ENCODE measurements at regions of chr12 and their contacts with region 1.

Region 1: DNA sequence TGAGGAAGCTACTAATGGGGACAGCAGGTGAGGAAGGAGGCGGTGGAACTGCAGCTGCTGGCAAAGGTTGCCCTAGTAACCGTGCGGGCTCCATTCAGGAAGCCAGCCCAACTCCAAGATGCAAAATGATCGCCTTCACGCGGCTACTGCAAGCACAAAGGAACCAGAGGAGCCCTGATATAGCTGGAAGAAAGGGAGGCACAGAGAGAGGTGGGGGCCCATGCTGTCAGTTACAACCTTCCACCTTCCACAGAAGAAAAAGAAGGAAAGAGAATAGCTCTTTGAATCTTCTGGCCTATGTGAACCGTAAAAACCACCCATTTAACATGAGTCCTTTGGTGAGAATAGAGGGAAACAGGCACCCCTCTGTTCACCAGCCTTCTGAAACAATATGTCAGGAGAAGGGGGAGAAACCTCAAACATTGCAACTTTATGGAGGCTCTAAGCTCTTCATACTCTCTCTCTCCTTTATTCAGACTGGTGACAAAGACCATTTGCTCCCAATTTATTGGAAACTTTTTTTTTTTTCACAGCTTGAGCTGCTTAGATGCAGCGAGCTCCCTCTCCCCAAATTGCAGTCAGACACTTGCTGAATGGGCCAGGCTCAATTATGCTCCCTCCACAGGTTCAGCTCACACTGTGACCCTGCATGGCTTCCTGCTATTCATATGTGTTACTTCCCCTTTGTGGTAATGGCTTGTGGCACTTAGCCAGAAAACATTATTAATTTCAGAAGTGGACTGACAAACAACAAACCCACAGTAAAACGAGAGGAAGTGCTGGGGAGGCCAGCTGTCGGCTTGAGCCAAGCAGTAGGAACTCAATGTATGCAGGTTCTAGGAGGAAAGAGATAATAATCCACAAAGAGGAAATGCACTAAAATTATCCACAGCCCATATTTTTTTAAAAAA is 6.2 kb downstream of the DUSP6 start:
- DNase-seq: peak; percentile 33 to 80
- ATAC-seq: peak; percentile 60 to 86 (median 80)
- H3K4me3 ChIP-seq: peak overlapping the region in 6 of 10 donors; percentile 66 to 94 (median 84)
- H3K27ac ChIP-seq: peak overlapping the region; percentile 36 to 100 (median 68)
- H3K4me1 ChIP-seq: peaks cover 15 to 68% (median 48%) of the 10 kb centered on the region in 9 donors
- H3K27me3 ChIP-seq: no peaks in the 10 kb centered on the region
- CTCF ChIP-seq: no peak

Region 2: DNA sequence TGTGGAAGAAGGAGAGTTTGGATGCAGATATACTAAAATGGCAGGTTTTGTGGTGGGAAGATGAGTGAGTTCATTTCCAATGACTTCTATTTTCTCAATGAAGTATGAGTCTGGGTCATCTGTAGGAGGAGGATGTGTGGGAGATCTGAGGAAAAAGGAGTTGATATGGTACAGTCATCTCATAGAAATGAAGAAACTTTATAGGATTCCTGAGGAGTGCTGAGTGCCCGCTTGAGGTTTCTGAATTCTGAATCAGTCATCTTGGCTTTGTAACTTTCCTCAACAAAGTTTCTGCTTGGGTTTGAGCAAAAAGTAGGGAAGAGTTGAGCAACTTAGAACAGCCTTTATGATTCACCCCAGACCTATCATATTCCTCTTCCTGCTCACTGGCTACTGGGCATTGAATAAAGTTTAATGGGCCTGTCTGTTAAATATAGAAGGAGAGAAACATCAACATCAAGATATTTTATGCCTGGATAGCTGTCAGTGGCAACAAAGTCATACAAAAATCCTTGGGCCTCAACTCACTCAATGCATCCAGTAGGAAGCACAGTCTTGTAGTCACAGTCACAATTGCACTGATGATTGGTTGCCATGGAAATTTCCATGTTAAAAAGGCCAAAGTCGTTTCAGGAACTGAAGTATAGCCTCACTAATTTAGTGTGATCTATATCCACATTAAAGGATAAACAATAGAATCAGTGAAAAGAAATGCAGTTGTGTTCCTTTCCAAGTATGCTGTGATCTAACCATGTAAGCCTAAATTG is 278.5 kb before region 1 on chr12:
- intact Hi-C with region 1: loop called in 1 of 10 experiments (anchors 10 kb)
- DNase-seq: no peak
- ATAC-seq: no peak
- H3K4me3 ChIP-seq: no peak overlapping the region
- H3K27ac ChIP-seq: no peak overlapping the region
- H3K4me1 ChIP-seq: peaks cover 0 to 3% (median 0%) of the 10 kb centered on the region in 9 donors
- H3K27me3 ChIP-seq: no peaks in the 10 kb centered on the region
- CTCF ChIP-seq: no peak

Region 3: GRCh38 chr12:89162704-89163261 is 183.3 kb before region 1 on chr12:
- intact Hi-C with region 1: loop called in 5 of 10 experiments (anchors 5 to 10 kb)
- DNase-seq: peak in 1 of 2 donors; percentile 65
- ATAC-seq: peak; percentile 77 to 91 (median 79)
- H3K4me3 ChIP-seq: no peak overlapping the region
- H3K27ac ChIP-seq: peak overlapping the region; percentile 31 to 93 (median 68)
- H3K4me1 ChIP-seq: peaks cover 0 to 88% (median 42%) of the 10 kb centered on the region in 9 donors
- H3K27me3 ChIP-seq: no peaks in the 10 kb centered on the region
- CTCF ChIP-seq: no peak

Region 4: GRCh38 chr12:89225808-89226411 is 120.2 kb before region 1 on chr12:
- intact Hi-C with region 1: loop called in 3 of 10 experiments (anchors 5 to 10 kb)
- DNase-seq: no peak
- ATAC-seq: peak in 7 of 8 donors; percentile 51 to 98 (median 83)
- H3K4me3 ChIP-seq: no peak overlapping the region
- H3K27ac ChIP-seq: peak overlapping the region in 4 of 10 donors; percentile 2 to 78 (median 53)
- H3K4me1 ChIP-seq: peaks cover 0 to 25% (median 10%) of the 10 kb centered on the region in 9 donors
- H3K27me3 ChIP-seq: no peaks in the 10 kb centered on the region
- CTCF ChIP-seq: no peak

Region 5: GRCh38 chr12:89244536-89244935 is 101.5 kb before region 1 on chr12:
- intact Hi-C with region 1: loop called in 6 of 10 experiments (anchors 5 to 10 kb)
- DNase-seq: no peak
- ATAC-seq: peak in 4 of 8 donors; percentile 42 to 69 (median 56)
- H3K4me3 ChIP-seq: no peak overlapping the region
- H3K27ac ChIP-seq: peak overlapping the region in 2 of 10 donors; percentile 18 to 84
- H3K4me1 ChIP-seq: peaks cover 0 to 36% (median 14%) of the 10 kb centered on the region in 9 donors
- H3K27me3 ChIP-seq: no peaks in the 10 kb centered on the region
- CTCF ChIP-seq: no peak

Region 6: DNA sequence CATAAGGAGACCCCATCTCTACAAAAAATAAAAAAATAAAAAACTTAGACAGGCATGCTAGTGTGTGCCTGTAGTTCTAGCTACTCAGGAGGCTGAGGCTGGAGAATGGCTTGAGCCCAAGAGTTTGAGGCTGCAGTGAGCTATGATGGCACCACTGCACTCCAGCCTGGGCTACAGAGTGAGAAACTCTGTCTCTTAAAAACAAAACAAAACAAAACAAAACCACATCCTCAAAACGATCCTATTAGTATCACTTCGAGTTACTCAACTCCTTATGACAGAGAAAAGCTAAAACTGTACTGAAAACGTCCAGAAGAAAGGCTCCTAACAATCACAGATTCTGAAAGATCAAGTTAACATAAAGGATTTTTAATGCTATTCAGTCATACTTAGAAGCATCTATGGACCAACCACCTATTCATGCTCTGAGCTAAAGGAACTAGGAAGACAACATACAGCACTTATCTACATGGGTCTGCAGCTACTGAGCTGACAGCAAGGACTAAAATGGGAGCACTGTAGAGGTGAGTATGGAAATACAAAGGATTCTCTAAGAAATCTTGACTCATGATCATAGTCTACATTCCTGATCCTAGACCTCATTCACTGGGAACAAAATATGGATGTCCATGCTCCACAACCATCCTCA is 81.5 kb after region 1 on chr12:
- intact Hi-C with region 1: no loop called
- DNase-seq: no peak
- ATAC-seq: peak in 4 of 8 donors; percentile 24 to 48 (median 40)
- H3K4me3 ChIP-seq: no peak overlapping the region
- H3K27ac ChIP-seq: peak overlapping the region in 1 of 10 donors; percentile 59
- H3K4me1 ChIP-seq: peaks cover 0 to 26% (median 0%) of the 10 kb centered on the region in 9 donors
- H3K27me3 ChIP-seq: no peaks in the 10 kb centered on the region
- CTCF ChIP-seq: no peak